Ascending aorta (tissue), 2 donors: ENCODE measurements at regions of chr10 and their contacts with region 1.

Region 1: GRCh38 chr10:4067531-4067930 is 282.5 kb upstream of the KLF6 start:
- DNase-seq: no peak
- H3K4me3 ChIP-seq: no peak overlapping the region
- H3K27ac ChIP-seq: peak overlapping the region; percentile 7 to 68
- H3K4me1 ChIP-seq: peaks cover 5 to 24% of the 10 kb centered on the region in 2 donors
- H3K27me3 ChIP-seq: no peaks in the 10 kb centered on the region
- CTCF ChIP-seq: no peak

Region 2: DNA sequence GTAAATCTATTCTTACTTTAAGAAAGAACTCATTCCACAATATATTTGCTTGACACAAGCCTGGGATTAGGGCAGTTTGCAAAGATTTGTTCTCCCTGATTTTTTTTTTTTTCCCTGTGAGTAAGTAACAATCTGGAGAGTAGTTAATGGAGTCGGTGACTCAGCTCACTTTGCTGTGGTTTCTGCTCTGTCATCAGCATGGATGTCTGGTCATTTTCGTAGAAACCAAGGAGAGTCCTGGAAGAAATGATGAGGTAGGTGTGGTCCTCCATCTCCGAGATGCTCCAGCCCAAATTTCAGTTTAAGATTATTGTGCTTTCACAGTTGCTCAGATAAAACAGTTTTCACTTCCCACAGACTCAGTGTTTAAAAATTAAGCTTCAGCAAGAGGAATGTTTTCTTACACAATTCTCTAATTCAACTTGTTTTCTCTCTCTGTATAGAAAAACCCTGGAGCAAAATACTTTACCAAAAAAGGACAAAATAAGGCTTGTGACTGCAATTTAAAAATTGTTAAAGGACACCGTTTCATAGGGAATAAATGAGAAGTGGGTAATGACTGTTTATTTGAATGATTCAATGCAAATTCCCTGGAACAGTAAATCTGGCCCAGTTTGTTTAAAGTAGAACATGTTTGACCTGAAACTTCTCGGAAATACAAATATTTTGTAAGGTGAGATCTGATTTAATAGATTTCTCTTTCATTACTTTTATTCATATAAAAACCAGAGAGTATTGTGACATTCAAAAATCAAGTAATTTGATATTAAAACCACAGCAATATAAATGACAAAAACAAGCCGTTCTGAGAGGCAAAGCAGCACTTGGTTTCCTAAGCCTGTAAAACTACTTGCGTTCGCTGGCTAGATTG is 818.4 kb before region 1 on chr10:
- intact Hi-C with region 1: loop called (anchors 10 kb)
- DNase-seq: peak in 1 of 2 donors; percentile 81
- H3K4me3 ChIP-seq: peak overlapping the region; percentile 6
- H3K27ac ChIP-seq: peak overlapping the region; percentile 76 to 81
- H3K4me1 ChIP-seq: peaks cover 0 to 14% of the 10 kb centered on the region in 2 donors
- H3K27me3 ChIP-seq: no peaks in the 10 kb centered on the region
- CTCF ChIP-seq: no peak

Region 3: GRCh38 chr10:4656576-4657182 is 589.1 kb after region 1 on chr10:
- intact Hi-C with region 1: loop called (anchors 10 kb)
- DNase-seq: peak in 1 of 2 donors; percentile 70
- H3K4me3 ChIP-seq: no peak overlapping the region
- H3K27ac ChIP-seq: no peak overlapping the region
- H3K4me1 ChIP-seq: peaks cover 0 to 8% of the 10 kb centered on the region in 2 donors
- H3K27me3 ChIP-seq: no peaks in the 10 kb centered on the region
- CTCF ChIP-seq: peak; percentile 84 to 91 (median 84)